GM12878 (cell line): ENCODE measurements at regions of chr17 and their contacts with region 1.

Region 1: DNA sequence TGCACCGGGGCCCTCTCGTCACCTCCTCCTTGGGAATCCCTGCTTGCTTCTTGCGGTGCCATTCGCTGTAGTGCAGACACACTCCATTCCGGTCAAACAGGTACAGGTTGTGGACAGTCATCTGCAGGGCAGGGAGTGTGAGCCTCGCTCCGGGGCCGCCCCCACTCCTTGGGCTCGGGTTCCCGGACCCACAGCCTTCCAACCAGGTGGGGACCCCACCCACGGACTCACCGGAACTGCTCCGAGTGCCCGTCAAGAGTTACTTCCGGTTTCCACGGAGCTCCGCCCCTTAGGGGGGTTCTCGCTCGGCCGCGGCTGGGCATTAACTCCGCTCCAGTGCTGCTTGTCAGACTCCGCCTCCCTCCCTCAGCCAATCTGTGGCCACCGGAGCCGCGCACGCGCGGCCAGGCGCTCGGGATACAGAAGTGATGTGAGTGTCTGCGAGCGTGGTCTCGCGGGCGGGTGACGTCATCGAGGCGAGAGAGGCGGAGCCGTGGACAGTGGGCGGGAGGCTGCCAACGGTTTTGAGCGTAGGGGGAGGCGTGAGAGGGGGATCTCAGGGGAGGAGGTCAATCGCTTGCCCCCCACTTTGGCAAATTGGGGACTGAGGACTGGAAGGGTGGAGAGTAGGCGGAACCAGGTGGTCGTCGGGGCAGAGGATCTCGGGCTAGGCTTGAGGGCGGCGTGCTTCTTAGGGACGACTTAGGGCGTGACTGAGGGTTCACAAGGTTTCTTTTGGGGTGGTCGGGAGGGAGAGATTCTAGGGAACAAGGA is at the starts of genes CNTROB and TRAPPC1:
- DNase-seq: peak; percentile 98
- ATAC-seq: peak; percentile 92
- H3K4me3 ChIP-seq: peak within 1 kb of the TSS; percentile 100
- H3K27ac ChIP-seq: peak within 1 kb of the TSS; percentile 96
- H3K4me1 ChIP-seq: peaks cover 8% of the 10 kb centered on the region
- H3K27me3 ChIP-seq: no peaks in the 10 kb centered on the region
- CTCF ChIP-seq: no peak
- EP300 ChIP-seq: peak in 1 of 2 experiments; percentile 27; a peak in 1 of 4 replicates
- POLR2A ChIP-seq: peak; percentile 92
- RAD21 ChIP-seq: no peak
- polyA plus RNA-seq, gene CNTROB: 2.0 to 4.2 TPM
- polyA plus RNA-seq, gene TRAPPC1: 95.5 to 113 TPM

Region 2: DNA sequence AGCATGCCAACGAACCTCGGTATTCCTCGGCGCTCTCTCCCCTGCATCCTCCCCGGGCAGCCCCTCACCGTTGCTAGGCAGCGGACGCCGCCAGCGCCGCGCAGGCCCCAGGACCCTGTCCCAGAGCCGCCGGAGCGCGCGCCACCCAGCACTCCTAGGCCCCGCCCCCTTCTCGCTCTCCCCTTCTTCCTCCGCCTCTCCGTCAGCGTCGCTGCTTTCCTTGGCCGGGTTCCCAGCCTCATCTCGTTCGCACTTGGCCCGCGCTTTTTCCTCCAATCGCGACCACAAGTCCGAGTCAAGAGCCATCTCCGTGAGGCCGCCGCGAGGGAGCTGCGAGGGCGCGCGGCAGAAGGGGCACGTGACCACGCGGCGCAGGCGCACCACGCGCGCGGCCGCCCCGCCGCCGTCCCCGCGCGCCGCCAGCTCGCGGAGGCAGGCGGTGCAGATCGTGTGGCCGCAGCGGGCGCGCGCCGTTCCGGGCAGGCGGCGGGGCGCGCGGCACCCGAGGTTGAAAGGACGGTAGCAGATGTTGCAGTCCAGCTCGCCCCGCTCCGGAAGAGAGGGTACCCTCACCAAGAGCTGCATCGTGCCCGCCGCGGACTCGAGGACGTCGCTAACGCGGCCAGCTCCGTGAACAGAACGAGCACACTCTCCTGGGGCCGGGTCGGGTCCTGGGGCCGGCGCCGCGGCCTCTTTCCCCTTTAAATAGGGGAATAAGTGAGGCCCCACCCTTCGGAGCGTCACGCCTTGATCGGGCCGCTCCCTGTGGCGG is 16.1 kb before region 1 on chr17 and contains the start of gene RNF227:
- CTCF ChIA-PET with region 1: interaction called, 33 read pairs
- POLR2A ChIA-PET with region 1: interaction called, 27 read pairs
- RAD21 ChIA-PET with region 1: interaction called, 14 read pairs
- SMC1A ChIA-PET with region 1: interaction called, 12 read pairs
- in situ Hi-C with region 1: no loop called
- intact Hi-C with region 1: no loop called
- DNase-seq: peak; percentile 57
- ATAC-seq: peak; percentile 87
- H3K4me3 ChIP-seq: peak within 1 kb of the TSS; percentile 76
- H3K27ac ChIP-seq: peak within 1 kb of the TSS; percentile 34
- H3K4me1 ChIP-seq: peaks cover 10% of the 10 kb centered on the region
- H3K27me3 ChIP-seq: no peaks in the 10 kb centered on the region
- CTCF ChIP-seq: 0 out of 6 replicates have a peak, but pooled peaks of 1 of the 3 experiments have one; percentile 6
- EP300 ChIP-seq: no peak
- POLR2A ChIP-seq: peak; percentile 71
- RAD21 ChIP-seq: no peak
- polyA plus RNA-seq, gene RNF227: 0.49 to 0.87 TPM

Region 3: GRCh38 chr17:7944326-7944725 is 12.4 kb after region 1 on chr17:
- CTCF ChIA-PET with region 1: interaction called, 14 read pairs
- POLR2A ChIA-PET with region 1: interaction called, 12 read pairs
- RAD21 ChIA-PET with region 1: interaction called, 3 read pairs
- SMC1A ChIA-PET with region 1: interaction called, 9 read pairs
- in situ Hi-C with region 1: no loop called
- intact Hi-C with region 1: no loop called
- DNase-seq: no peak
- ATAC-seq: no peak
- H3K4me3 ChIP-seq: no peak overlapping the region
- H3K27ac ChIP-seq: no peak overlapping the region
- H3K4me1 ChIP-seq: no peaks in the 10 kb centered on the region
- H3K27me3 ChIP-seq: no peaks in the 10 kb centered on the region
- CTCF ChIP-seq: no peak
- EP300 ChIP-seq: no peak
- POLR2A ChIP-seq: no peak
- RAD21 ChIP-seq: no peak

Region 4: DNA sequence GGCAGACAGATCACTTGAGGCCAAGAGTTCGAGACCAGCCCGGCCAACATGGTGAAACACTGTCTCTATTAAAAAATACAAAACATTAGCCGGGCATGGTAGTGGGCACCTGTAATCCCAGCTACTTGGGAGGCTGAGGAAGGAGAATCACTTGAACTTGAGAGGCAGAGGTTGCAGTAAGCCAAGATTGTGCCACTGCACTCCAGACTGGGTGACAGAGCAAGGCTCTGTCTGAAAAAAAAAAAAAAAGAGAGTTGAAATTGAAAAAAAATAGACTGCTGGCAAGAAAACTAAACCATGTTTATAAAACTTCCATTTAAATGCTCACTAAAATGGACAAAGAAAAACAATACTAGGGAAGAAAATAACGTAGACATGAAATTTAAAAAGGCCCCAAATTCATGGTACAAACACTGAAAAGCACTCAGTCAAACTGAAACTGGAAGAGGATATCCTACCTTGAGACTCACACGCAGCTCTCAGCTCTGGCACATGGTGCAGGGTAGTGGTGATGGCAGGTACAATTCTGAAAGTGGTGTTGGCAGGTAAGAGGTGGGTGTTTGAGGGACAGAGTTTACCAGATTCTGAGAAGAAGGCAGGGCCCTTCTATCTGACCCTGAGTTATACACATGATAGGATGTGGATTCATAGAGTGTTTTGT is 19.4 kb after region 1 on chr17:
- CTCF ChIA-PET with region 1: interaction called, 4 read pairs
- POLR2A ChIA-PET with region 1: interaction called, 12 read pairs
- RAD21 ChIA-PET with region 1: interaction called, 6 read pairs
- SMC1A ChIA-PET with region 1: interaction called, 11 read pairs
- in situ Hi-C with region 1: no loop called
- intact Hi-C with region 1: no loop called
- DNase-seq: peak; percentile 45
- ATAC-seq: peak; percentile 99
- H3K4me3 ChIP-seq: no peak overlapping the region
- H3K27ac ChIP-seq: peak overlapping the region; percentile 41
- H3K4me1 ChIP-seq: peaks cover 12% of the 10 kb centered on the region
- H3K27me3 ChIP-seq: no peaks in the 10 kb centered on the region
- CTCF ChIP-seq: no peak
- EP300 ChIP-seq: no peak
- POLR2A ChIP-seq: peak; percentile 49
- RAD21 ChIP-seq: no peak